ENCODE measurements at regions of chr5 and their contacts with region 1.

Region 1: GRCh38 chr5:108642167-108642906 is 105.4 kb upstream of the FER start:
- DNase-seq: peak; percentile 33 to 71
- H3K4me3 ChIP-seq: no peak overlapping the region
- H3K27ac ChIP-seq: no peak overlapping the region
- H3K4me1 ChIP-seq: peaks cover 0 to 6% (median 2%) of the 10 kb centered on the region in 4 experiments; a peak in 2 of 7 replicates
- H3K27me3 ChIP-seq: no peaks in the 10 kb centered on the region
- CTCF ChIP-seq: peak; percentile 74 to 92 (median 79)
- EP300 ChIP-seq: no peak
- POLR2A ChIP-seq: no peak
- RAD21 ChIP-seq: peak; percentile 94

Region 2: DNA sequence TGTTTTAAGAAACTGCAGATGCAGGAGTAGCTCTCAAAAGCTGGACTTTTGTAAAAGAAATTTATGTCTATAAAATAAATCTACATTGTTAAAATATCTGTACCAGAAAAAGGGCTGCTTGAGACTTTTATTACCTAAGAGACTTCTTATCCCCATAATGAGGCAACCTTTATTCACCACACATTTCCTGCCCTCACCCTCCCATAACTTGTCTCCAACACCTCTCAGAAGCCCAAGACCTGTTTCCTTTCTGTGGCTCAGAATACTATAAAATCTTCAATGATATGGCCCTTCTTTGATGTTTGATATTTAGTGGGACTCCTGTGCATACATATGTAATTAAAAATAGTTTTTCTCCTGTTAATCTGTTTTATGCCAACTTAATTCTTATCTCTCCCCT is 36.2 kb before region 1 on chr5:
- CTCF ChIA-PET with region 1: no interaction called
- POLR2A ChIA-PET with region 1: no interaction called
- DNase-seq: no peak
- H3K4me3 ChIP-seq: no peak overlapping the region
- H3K27ac ChIP-seq: no peak overlapping the region
- H3K4me1 ChIP-seq: peaks cover 0 to 2% (median 0%) of the 10 kb centered on the region in 4 experiments; a peak in 1 of 7 replicates
- H3K27me3 ChIP-seq: no peaks in the 10 kb centered on the region
- CTCF ChIP-seq: no peak
- EP300 ChIP-seq: no peak
- POLR2A ChIP-seq: no peak
- RAD21 ChIP-seq: no peak

Region 3: DNA sequence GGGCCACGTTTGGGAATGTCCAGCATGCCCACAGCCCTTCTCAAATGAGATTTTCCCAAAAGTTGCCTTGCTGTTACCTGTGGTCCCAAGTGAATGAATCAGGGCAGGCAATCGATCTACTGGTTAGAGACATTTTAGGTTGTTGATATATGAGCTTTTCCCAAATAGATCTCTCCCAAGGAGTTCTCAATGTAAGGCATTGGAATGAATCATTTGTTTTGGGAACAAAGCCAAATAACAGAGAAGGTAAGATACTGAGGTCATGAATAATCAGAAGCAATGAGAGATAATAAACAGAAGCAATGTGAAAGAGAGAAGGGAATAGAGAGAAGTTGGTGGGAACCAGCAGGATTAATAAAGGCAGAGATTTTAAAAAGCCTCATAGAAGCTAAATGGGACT is 11.7 kb after region 1 on chr5:
- CTCF ChIA-PET with region 1: interaction called, 10 read pairs
- POLR2A ChIA-PET with region 1: no interaction called
- DNase-seq: no peak
- H3K4me3 ChIP-seq: no peak overlapping the region
- H3K27ac ChIP-seq: no peak overlapping the region
- H3K4me1 ChIP-seq: no peaks in the 10 kb centered on the region
- H3K27me3 ChIP-seq: no peaks in the 10 kb centered on the region
- CTCF ChIP-seq: no peak
- EP300 ChIP-seq: no peak
- POLR2A ChIP-seq: no peak
- RAD21 ChIP-seq: no peak

Region 4: DNA sequence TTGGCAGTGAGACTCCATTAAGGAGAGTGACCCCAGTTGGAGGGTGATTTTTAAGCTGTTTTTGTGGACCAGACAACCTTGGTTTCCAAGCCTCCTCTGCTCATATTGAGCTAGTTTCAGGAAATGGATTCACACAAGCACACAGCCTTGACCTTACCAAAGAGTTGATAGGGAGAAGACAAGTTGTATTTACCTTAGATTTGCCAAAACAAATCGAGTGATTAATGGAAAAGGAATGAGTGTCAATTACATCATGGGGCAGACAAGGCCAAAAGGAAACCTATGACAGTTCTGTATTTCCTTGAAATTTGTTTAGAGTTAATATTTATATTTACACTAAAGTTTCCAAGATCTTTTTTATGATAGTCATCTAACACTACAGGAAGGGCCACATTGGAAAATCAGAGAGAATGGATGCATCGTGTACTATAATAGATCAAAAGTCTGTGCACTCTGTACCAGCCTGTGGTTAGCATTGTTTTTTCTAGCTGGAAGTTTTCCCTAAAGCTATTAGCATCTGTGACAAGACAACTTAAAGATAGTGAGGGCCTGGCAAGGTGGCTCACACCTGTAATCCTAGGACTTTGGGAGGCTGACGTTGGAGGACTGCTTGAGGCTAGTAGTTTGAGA is 19.4 kb after region 1 on chr5:
- CTCF ChIA-PET with region 1: interaction called, 11 read pairs
- POLR2A ChIA-PET with region 1: no interaction called
- DNase-seq: no peak
- H3K4me3 ChIP-seq: no peak overlapping the region
- H3K27ac ChIP-seq: no peak overlapping the region
- H3K4me1 ChIP-seq: no peaks in the 10 kb centered on the region
- H3K27me3 ChIP-seq: no peaks in the 10 kb centered on the region
- CTCF ChIP-seq: no peak
- EP300 ChIP-seq: no peak
- POLR2A ChIP-seq: no peak
- RAD21 ChIP-seq: no peak

Measured in H1 (cell line).